Mammary epithelial cell (primary cell): ENCODE measurements at regions of chr6 and their contacts with region 1.

Region 1: GRCh38 chr6:10441004-10441662 is 26.3 kb upstream of the TFAP2A start:
- DNase-seq: peak; percentile 97
- H3K4me3 ChIP-seq: peak overlapping the region in 1 of 3 experiments; percentile 26
- H3K27ac ChIP-seq: peak overlapping the region; percentile 96
- H3K4me1 ChIP-seq: peaks cover 14% of the 10 kb centered on the region
- H3K27me3 ChIP-seq: no peaks in the 10 kb centered on the region
- CTCF ChIP-seq: no peak

Region 2: DNA sequence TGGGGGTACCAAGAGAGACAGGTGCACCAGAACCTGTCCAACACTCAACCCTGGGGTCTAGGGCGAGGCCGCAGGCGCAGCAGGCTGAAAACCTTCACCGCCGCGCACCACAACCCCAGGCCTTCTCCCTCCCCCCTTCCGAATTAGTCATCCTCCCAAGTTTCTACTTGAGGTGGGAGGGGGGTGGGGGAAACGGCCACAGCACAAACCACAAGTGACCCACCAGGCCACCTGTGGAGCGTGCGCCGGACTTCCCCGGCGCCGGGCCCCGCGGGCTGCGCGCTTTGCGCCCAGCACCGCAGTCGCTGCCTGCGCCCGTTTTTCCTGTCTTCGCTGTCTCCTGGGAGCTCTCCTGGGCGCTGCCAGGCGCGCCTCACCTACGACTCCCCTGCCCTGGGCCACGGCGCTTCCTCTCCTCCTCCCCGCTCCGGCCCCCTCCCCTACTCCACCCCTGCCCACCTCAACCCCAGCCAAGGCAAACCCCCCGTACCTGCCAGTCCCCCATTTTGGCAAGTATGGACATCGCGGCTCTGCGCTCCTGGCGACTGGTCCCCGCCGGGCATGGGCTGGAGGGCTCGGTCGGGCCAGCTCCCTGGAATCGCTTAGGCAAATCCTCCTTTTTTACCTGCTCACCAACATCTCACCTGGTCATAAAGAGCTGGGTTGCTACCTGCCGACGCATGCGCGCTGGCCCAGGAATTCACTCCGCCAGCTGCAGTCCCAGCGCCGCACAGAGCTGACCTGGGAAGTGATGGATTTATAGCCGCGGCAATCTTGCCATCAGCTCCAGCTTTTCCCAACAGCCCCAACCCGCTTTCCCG is 22.0 kb before region 1 on chr6:
- CTCF ChIA-PET with region 1: no interaction called
- dilution Hi-C with region 1: no loop called
- in situ Hi-C with region 1: no loop called
- intact Hi-C with region 1: loop called (anchors 1 kb)
- DNase-seq: peak; percentile 95
- H3K4me3 ChIP-seq: peak overlapping the region; percentile 53 to 96 (median 84)
- H3K27ac ChIP-seq: peak overlapping the region; percentile 99
- H3K4me1 ChIP-seq: peaks cover 29% of the 10 kb centered on the region
- H3K27me3 ChIP-seq: no peaks in the 10 kb centered on the region
- CTCF ChIP-seq: no peak

Region 3: GRCh38 chr6:10451828-10452509 is 10.8 kb after region 1 on chr6:
- CTCF ChIA-PET with region 1: interaction called, 8 read pairs
- dilution Hi-C with region 1: no loop called
- in situ Hi-C with region 1: no loop called
- intact Hi-C with region 1: loop called (anchors 1 kb)
- DNase-seq: peak; percentile 98
- H3K4me3 ChIP-seq: no peak overlapping the region
- H3K27ac ChIP-seq: peak overlapping the region; percentile 87
- H3K4me1 ChIP-seq: peaks cover 31% of the 10 kb centered on the region
- H3K27me3 ChIP-seq: no peaks in the 10 kb centered on the region
- CTCF ChIP-seq: no peak

Region 4: DNA sequence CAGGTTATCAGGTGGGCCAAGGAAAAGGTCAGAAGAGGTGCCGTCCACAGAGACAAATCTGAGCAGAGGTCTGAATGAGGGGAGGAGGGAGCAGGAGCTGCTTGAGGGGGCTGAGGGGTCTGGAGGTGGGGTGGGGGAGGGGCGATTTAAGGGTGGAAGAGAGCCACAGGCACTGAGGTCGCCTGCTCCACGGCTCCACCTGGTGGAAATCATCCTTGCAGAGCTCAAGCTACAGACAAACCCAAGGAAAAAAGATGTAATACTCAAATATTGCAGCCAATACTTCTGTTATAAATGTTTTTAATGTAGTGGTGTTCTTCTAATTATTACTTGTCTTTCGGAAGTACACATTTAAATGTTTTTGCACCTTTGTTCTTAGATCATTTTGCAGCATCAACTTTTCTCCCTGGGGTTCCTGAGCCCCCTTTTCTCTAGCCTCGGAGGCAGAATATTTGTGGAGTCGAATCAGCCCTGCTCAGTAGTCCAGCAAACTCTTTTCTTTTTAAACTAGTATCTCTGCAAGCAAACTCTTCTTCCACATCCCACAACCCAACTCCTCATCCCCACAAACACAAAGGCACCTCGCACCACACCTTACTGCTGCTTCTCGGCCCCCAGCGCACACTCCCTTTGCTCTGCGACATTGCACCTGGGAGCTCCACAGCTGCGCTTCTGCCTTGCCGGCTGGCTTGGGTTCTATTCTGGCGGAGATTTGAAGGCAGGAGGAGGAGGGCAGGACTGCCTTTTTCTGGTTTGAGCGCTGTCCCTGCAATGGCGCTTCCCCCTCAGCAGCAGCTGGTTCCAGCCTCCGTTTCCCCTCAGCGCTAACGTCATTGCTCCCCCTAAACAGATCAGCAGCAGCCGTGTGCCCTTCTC is 24.7 kb after region 1 on chr6:
- CTCF ChIA-PET with region 1: no interaction called
- dilution Hi-C with region 1: no loop called
- in situ Hi-C with region 1: no loop called
- intact Hi-C with region 1: loop called (anchors 1 kb)
- DNase-seq: peak; percentile 36
- H3K4me3 ChIP-seq: no peak overlapping the region
- H3K27ac ChIP-seq: no peak overlapping the region
- H3K4me1 ChIP-seq: no peaks in the 10 kb centered on the region
- H3K27me3 ChIP-seq: no peaks in the 10 kb centered on the region
- CTCF ChIP-seq: peak; percentile 48 to 73